GM23248 (cell line): ENCODE measurements at regions of chr7 and their contacts with region 1.

Region 1: GRCh38 chr7:122219253-122219865 is 75.3 kb upstream of the AASS start:
- DNase-seq: peak; percentile 38
- H3K4me3 ChIP-seq: no peak overlapping the region
- H3K27ac ChIP-seq: no peak overlapping the region
- H3K4me1 ChIP-seq: no peaks in the 10 kb centered on the region
- H3K27me3 ChIP-seq: no peaks in the 10 kb centered on the region

Region 2: DNA sequence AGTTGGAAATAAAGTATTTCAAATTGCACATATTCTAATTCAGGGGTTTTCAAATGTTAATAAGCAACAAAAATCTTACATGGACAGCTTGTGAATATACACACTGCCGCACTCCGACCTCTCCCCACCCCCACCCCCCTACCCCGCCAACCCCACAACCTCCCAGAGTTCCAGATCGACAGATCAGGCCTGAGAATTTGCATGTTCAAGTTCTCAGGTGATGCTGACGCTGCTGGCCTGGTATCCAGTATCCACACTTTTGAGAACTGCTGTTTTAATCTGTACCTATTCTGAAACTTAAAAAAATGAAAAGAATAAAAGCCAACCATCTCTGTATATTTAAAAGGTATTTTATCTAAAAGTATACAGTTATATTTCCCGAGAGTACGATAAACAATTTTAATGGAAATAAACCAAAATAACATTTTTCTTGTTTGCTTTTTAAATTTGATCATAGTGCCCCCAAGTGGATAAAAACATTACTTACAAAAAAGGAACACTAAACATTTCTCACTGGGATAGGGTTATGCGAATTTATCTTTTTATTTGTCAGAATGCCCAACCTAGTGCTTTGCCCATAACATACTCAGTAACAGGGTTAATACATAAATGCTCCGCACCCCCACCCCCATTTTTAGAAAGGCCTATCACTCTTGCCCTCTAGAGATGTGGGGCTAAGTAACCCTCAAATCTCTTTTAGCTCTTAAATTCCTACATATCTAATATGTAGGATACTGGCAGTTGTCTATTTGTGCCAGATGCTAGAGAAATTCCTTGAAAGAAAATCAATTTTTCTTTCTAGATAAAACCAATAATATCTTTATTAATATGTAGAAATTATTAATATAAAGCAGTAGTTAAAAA is 313.3 kb after region 1 on chr7:
- in situ Hi-C with region 1: loop called (anchors 10 kb)
- DNase-seq: peak; percentile 33
- H3K4me3 ChIP-seq: no peak overlapping the region
- H3K27ac ChIP-seq: no peak overlapping the region
- H3K4me1 ChIP-seq: no peaks in the 10 kb centered on the region
- H3K27me3 ChIP-seq: no peaks in the 10 kb centered on the region